GM10248 (cell line): ENCODE measurements at regions of chr9 and their contacts with region 1.

Region 1: GRCh38 chr9:71285191-71285656 is 163.8 kb upstream of the TRPM3 start:
- DNase-seq: peak; percentile 28
- CTCF ChIP-seq: peak; percentile 92

Region 2: GRCh38 chr9:70535546-70536323 is 749.5 kb before region 1 on chr9:
- CTCF ChIA-PET with region 1: no interaction called
- POLR2A ChIA-PET with region 1: no interaction called
- DNase-seq: no peak
- CTCF ChIP-seq: no peak

Region 3: DNA sequence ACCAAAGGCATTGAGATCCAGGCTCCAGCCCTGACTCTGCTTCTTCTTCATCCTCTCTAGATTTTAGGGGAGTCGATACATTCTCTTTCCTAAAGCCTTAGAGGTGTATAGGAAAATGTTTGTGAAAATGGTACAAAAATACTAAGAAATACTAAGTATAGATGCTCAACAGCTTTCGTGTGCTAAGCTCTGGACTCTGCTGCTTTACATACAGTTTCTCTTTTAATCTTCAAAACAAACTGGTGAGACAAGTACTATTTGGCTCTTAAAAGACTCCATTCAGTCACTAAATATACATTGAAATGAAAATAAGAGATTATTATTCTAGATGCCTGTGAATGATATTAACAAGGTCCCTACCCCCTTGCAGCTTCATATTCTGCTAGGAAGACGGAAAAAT is 10.7 kb after region 1 on chr9:
- CTCF ChIA-PET with region 1: interaction called, 48 read pairs
- POLR2A ChIA-PET with region 1: no interaction called
- DNase-seq: no peak
- CTCF ChIP-seq: no peak

Region 4: GRCh38 chr9:71302776-71303175 is 17.6 kb after region 1 on chr9:
- CTCF ChIA-PET with region 1: interaction called, 28 read pairs
- POLR2A ChIA-PET with region 1: no interaction called
- DNase-seq: no peak
- CTCF ChIP-seq: no peak

Region 5: GRCh38 chr9:71322311-71322710 is 37.1 kb after region 1 on chr9:
- CTCF ChIA-PET with region 1: interaction called, 16 read pairs
- POLR2A ChIA-PET with region 1: no interaction called
- DNase-seq: no peak
- CTCF ChIP-seq: no peak

Region 6: GRCh38 chr9:71620746-71621145 is 335.5 kb after region 1 on chr9:
- CTCF ChIA-PET with region 1: no interaction called
- POLR2A ChIA-PET with region 1: no interaction called
- DNase-seq: no peak
- CTCF ChIP-seq: no peak

Region 7: DNA sequence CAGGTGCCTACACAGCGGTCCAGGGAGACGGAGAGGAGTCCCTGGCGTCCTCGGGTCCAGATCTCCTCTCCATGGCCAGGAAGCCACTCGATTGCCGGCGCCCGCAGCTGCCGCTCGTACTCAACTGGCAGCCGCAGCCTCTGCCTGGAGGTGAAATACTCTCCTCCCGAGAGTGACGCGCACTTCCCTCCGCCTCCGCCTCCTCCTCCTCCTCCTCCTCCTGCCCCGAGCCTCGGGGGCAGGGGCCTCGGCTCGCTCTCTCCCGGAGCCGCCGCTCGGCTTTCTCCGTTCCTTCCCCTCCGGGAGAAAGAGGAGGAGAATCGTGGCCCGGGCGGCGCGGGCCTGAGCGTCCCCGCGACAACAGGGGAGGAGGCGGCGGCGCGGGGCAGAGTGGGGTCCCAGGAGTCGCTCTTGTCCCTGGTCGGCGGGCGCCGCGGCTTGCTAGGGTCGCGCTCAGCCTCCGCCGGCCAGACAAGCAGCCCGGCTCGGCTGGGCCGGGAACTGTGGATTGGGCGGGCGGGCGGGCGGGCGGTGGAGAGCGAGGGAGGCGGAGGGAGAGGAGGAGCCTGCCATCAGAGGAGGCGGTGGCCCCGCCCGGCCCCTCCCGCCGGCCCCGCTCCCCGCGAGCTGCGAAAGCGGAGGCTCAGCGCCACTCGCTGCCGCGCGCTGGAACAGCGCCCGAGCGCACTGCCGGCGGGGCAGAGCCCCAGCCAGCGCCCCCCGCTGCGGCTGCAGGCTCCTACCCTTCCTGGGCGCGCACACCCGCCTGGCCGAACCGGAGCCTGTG is 483.4 kb after region 1 on chr9 and contains the start of gene CEMIP2:
- CTCF ChIA-PET with region 1: interaction called, 12 read pairs
- POLR2A ChIA-PET with region 1: no interaction called
- DNase-seq: peak; percentile 90
- CTCF ChIP-seq: peak; percentile 74

Region 8: GRCh38 chr9:71819115-71819739 is 534.0 kb after region 1 on chr9:
- CTCF ChIA-PET with region 1: interaction called, 18 read pairs
- POLR2A ChIA-PET with region 1: no interaction called
- DNase-seq: no peak
- CTCF ChIP-seq: peak; percentile 74